RWPE1 (cell line): ENCODE measurements at regions of chr10 and their contacts with region 1.

Region 1: DNA sequence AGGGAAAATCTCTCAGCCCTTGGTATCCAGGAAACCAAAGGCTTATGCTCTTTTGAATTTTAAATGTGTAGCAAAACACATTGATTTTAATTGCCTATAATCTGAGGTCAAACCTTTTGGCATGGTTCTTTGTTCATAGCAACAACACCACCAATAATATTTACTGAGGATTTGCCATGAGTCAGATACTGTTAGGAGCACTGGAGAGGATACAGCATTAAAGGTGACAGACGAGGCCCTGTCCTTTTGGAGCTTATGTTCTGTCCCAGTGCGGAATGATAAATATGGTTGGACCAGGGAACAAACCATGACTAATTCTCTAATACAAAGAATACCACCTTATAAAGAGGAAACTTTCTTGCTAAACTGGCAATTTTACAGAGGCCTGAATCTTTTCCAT is 176.6 kb downstream of the CTNNA3 start:
- DNase-seq: no peak
- H3K27ac ChIP-seq: no peak overlapping the region
- CTCF ChIP-seq: no peak

Region 2: GRCh38 chr10:66958466-66958865 is 561.0 kb before region 1 on chr10:
- CTCF ChIA-PET with region 1: interaction called, 3 read pairs
- POLR2A ChIA-PET with region 1: interaction called, 13 read pairs
- DNase-seq: no peak
- H3K27ac ChIP-seq: no peak overlapping the region
- CTCF ChIP-seq: no peak

Region 3: DNA sequence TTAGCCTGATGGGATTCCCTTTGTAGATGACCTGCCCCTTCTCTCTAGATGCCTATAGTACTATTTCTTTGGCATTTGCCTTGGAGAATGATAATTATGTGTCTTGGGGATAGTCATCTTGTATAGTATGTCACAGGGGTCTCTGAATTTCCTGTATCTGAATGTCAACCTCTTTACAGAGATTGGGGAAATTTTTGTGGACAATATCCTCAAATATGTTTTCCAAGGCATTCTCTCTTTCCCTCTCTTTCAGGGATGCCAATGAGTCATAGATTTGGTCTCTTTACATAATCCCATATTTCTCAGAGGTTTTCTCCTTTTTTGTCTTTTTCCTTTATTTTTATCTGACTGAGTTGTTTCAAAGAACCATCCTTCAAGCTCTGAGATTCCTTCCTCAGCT is 77.2 kb after region 1 on chr10:
- CTCF ChIA-PET with region 1: no interaction called
- POLR2A ChIA-PET with region 1: no interaction called
- DNase-seq: no peak
- H3K27ac ChIP-seq: no peak overlapping the region
- CTCF ChIP-seq: no peak